ENCODE measurements at regions of chr11 and their contacts with region 1.

Region 1: GRCh38 chr11:77198440-77198849 is 70.4 kb downstream of the MYO7A start:
- DNase-seq: peak; percentile 11
- H3K4me3 ChIP-seq: no peak overlapping the region
- H3K27ac ChIP-seq: no peak overlapping the region
- H3K4me1 ChIP-seq: no peaks in the 10 kb centered on the region
- H3K27me3 ChIP-seq: no peaks in the 10 kb centered on the region
- CTCF ChIP-seq: peak; percentile 43 to 47
- POLR2A ChIP-seq: no peak

Region 2: GRCh38 chr11:77187776-77188632 is 10.4 kb before region 1 on chr11:
- CTCF ChIA-PET with region 1: interaction called, 16 read pairs
- POLR2A ChIA-PET with region 1: no interaction called
- dilution Hi-C with region 1: no loop called
- intact Hi-C with region 1: no loop called
- DNase-seq: peak; percentile 75
- H3K4me3 ChIP-seq: no peak overlapping the region
- H3K27ac ChIP-seq: no peak overlapping the region
- H3K4me1 ChIP-seq: no peaks in the 10 kb centered on the region
- H3K27me3 ChIP-seq: no peaks in the 10 kb centered on the region
- CTCF ChIP-seq: peak; percentile 81 to 94
- POLR2A ChIP-seq: no peak

Region 3: GRCh38 chr11:77411717-77412441 is 213.4 kb after region 1 on chr11:
- CTCF ChIA-PET with region 1: interaction called, 11 read pairs
- POLR2A ChIA-PET with region 1: no interaction called
- dilution Hi-C with region 1: no loop called
- intact Hi-C with region 1: no loop called
- DNase-seq: peak; percentile 62
- H3K4me3 ChIP-seq: peak overlapping the region; percentile 31 to 38 (median 34)
- H3K27ac ChIP-seq: no peak overlapping the region
- H3K4me1 ChIP-seq: peaks cover 20% of the 10 kb centered on the region
- H3K27me3 ChIP-seq: peaks cover 0 to 3% of the 10 kb centered on the region in 2 experiments
- CTCF ChIP-seq: no peak
- POLR2A ChIP-seq: peak; percentile 27

Region 4: DNA sequence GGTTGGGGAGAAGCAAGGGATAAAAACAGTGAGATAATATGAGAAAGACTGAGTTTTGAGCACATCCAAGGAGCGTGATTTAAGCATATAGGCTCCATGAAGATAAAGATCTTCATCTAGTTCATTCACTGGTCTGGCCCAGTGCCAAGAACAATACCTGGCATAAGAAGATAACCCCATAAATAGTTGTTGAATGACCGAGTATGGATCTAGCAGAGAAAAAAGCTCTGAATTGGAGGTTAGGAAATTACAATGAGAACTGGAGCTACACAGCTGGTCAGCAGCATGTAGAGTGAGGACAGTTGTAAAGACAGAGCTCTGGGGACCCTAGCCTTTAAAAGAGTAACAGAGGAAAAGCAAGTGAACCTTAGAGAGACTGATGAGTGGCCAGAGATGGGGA is 308.4 kb after region 1 on chr11:
- CTCF ChIA-PET with region 1: interaction called, 13 read pairs
- POLR2A ChIA-PET with region 1: no interaction called
- dilution Hi-C with region 1: no loop called
- intact Hi-C with region 1: no loop called
- DNase-seq: peak; percentile 81
- H3K4me3 ChIP-seq: no peak overlapping the region
- H3K27ac ChIP-seq: no peak overlapping the region
- H3K4me1 ChIP-seq: peaks cover 12% of the 10 kb centered on the region
- H3K27me3 ChIP-seq: peaks cover 4 to 6% of the 10 kb centered on the region in 2 experiments
- CTCF ChIP-seq: no peak
- POLR2A ChIP-seq: peak; percentile 48

Region 5: GRCh38 chr11:77530879-77531278 is 332.4 kb after region 1 on chr11:
- CTCF ChIA-PET with region 1: interaction called, 10 read pairs
- POLR2A ChIA-PET with region 1: no interaction called
- dilution Hi-C with region 1: no loop called
- intact Hi-C with region 1: no loop called
- DNase-seq: no peak
- H3K4me3 ChIP-seq: no peak overlapping the region
- H3K27ac ChIP-seq: no peak overlapping the region
- H3K4me1 ChIP-seq: no peaks in the 10 kb centered on the region
- H3K27me3 ChIP-seq: no peaks in the 10 kb centered on the region
- CTCF ChIP-seq: no peak
- POLR2A ChIP-seq: no peak

Region 6: GRCh38 chr11:77557554-77557953 is 359.1 kb after region 1 on chr11:
- CTCF ChIA-PET with region 1: interaction called, 41 read pairs
- POLR2A ChIA-PET with region 1: no interaction called
- dilution Hi-C with region 1: no loop called
- intact Hi-C with region 1: no loop called
- DNase-seq: peak; percentile 22
- H3K4me3 ChIP-seq: no peak overlapping the region
- H3K27ac ChIP-seq: no peak overlapping the region
- H3K4me1 ChIP-seq: peaks cover 3% of the 10 kb centered on the region
- H3K27me3 ChIP-seq: no peaks in the 10 kb centered on the region
- CTCF ChIP-seq: peak; percentile 5 to 32
- POLR2A ChIP-seq: no peak